ENCODE measurements at regions of chrX and their contacts with region 1.

Region 1: GRCh38 chrX:153782313-153782712 is 1.5 kb downstream of the SRPK3 start:
- DNase-seq: no peak
- H3K4me3 ChIP-seq: no peak overlapping the region
- H3K27ac ChIP-seq: no peak overlapping the region
- H3K4me1 ChIP-seq: peaks cover 18% of the 10 kb centered on the region
- H3K27me3 ChIP-seq: no peaks in the 10 kb centered on the region
- CTCF ChIP-seq: no peak
- POLR2A ChIP-seq: no peak

Region 2: DNA sequence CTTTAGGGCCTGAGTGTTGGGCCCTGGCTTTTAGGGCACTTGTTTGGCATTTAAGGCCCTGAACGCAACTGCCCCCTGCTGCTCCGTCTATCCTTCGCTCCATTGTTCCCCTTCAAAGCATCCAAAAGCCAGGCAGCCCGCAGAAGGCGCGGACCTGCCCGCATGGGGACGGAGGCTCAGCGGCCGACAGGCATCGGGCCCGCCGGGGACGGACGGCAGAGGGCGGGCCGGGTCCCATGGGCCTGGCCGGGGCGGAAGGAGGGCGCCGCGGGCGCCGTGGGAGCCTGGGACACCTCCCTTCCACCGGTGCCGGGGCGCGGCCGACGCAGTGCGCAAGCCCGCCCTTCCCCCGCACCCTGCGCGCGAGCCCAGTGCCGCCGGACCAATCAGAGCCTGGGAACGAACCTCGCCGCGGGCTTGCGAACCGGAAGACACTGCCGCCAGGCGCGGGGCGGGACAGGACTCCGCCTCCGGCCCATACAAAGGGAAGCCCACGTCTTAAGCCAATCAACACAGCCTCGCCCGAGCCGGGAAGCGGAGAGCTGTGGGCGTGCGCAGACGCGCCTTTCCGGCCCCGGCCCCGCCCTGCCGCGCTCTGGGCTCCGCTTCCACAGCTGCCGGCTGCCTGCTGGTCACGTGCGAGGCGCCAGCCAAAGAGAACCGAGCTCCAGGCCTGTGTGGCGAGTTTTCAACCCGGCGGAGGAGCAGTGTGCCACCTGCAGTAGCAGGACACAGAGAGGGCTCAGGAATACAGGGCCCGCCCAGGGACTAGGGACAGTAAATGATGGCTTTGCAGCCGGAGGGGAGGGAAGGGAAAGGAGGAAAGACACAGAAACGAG is 145.8 kb after region 1 on chrX:
- intact Hi-C with region 1: loop called (anchors 10 kb)
- DNase-seq: peak in 1 of 2 donors; percentile 98
- H3K4me3 ChIP-seq: peak overlapping the region; percentile 57 to 64
- H3K27ac ChIP-seq: peak overlapping the region; percentile 90
- H3K4me1 ChIP-seq: peaks cover 31% of the 10 kb centered on the region
- H3K27me3 ChIP-seq: no peaks in the 10 kb centered on the region
- CTCF ChIP-seq: no peak
- POLR2A ChIP-seq: peak in 1 of 2 donors; percentile 83

Region 3: DNA sequence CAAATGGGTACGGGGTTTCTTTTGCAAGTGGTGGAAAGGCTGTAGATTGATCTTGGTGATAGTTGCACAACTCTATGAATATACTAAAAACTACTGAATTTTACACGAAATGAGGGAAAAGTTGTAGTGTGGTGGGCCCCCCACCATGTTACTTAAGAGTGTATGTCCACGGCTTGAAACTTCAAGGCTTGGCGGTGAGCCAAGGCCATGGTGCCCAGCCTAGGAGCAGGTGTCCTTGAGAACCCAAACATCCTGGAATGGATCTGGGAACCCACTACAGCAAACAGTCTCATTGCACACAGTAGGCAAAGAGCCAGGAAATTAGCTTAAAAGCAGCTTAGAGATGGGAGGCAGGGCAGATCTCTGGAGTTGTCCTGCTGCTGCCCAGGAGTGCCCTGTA is 1351.9 kb after region 1 on chrX:
- intact Hi-C with region 1: no loop called
- DNase-seq: no peak
- H3K4me3 ChIP-seq: no peak overlapping the region
- H3K27ac ChIP-seq: no peak overlapping the region
- H3K4me1 ChIP-seq: no peaks in the 10 kb centered on the region
- H3K27me3 ChIP-seq: no peaks in the 10 kb centered on the region
- CTCF ChIP-seq: no peak
- POLR2A ChIP-seq: no peak